GM12878 (cell line): ENCODE measurements at regions of chr1 and their contacts with region 1.

Region 1: GRCh38 chr1:117616356-117616755 is 10.5 kb downstream of the TENT5C start:
- DNase-seq: no peak
- ATAC-seq: no peak
- H3K4me3 ChIP-seq: no peak overlapping the region
- H3K27ac ChIP-seq: no peak overlapping the region
- H3K4me1 ChIP-seq: no peaks in the 10 kb centered on the region
- H3K27me3 ChIP-seq: no peaks in the 10 kb centered on the region; a peak in 3 of 4 replicates
- CTCF ChIP-seq: no peak
- EP300 ChIP-seq: no peak
- POLR2A ChIP-seq: no peak
- RAD21 ChIP-seq: no peak

Region 2: DNA sequence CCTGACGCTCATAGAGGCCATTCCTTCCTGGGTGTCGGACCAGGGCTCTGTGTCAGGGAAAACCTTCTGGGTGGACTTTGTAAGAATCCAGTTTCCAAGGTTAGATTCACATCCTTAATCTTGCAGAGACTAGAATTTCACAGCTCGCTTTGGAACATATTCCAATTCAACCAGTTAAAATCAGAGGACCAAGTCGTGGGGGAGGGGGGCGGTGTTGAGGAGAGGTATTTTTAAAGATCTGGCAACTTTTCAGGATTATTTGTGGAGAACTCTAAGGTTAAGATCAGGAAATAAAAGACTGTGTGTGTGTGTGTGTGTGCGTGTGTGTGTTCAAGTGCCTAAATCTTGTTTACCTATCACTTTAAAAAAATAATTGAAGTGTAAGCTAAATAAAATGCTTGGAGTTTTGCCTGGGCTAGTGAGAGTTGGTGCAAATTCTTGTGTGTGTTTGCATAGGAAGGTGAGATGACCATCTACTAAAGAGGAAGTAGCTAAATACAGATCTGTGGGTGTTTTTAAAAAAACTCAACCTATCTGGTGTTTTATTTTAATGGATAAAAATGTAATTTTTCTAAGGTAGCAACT is 11.3 kb after region 1 on chr1:
- CTCF ChIA-PET with region 1: interaction called, 4 read pairs
- POLR2A ChIA-PET with region 1: interaction called, 3 read pairs
- RAD21 ChIA-PET with region 1: no interaction called
- SMC1A ChIA-PET with region 1: interaction called, 10 read pairs
- in situ Hi-C with region 1: no loop called
- intact Hi-C with region 1: no loop called
- DNase-seq: no peak
- ATAC-seq: peak; percentile 51; the same call in 2 of the 3 replicates
- H3K4me3 ChIP-seq: no peak overlapping the region
- H3K27ac ChIP-seq: no peak overlapping the region
- H3K4me1 ChIP-seq: peaks cover 8% of the 10 kb centered on the region
- H3K27me3 ChIP-seq: peaks cover 2 to 3% of the 10 kb centered on the region in 2 experiments; a peak in 3 of 4 replicates
- CTCF ChIP-seq: no peak
- EP300 ChIP-seq: no peak
- POLR2A ChIP-seq: no peak
- RAD21 ChIP-seq: no peak

Region 3: DNA sequence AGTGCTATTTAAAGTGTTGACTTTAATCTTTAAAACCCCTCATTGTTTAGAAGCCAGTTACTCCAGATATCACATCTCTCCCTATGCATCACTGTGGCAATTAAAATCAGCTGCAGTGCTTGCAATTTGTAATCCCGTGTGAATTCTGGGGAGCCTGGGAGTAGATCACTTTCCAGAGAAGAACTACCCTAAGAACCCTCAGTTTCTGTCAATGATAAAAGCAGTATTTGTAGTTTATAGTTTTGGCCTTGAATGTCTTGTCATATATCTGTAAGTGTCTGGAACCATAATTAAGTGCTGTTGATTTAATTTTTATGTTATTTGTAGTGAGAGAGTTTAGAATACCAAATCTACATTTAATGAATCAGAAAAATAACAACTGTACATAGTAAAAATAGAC is 574.2 kb after region 1 on chr1:
- CTCF ChIA-PET with region 1: no interaction called
- POLR2A ChIA-PET with region 1: no interaction called
- RAD21 ChIA-PET with region 1: no interaction called
- SMC1A ChIA-PET with region 1: no interaction called
- in situ Hi-C with region 1: no loop called
- intact Hi-C with region 1: no loop called
- DNase-seq: no peak
- ATAC-seq: no peak
- H3K4me3 ChIP-seq: no peak overlapping the region
- H3K27ac ChIP-seq: no peak overlapping the region
- H3K4me1 ChIP-seq: no peaks in the 10 kb centered on the region
- H3K27me3 ChIP-seq: no peaks in the 10 kb centered on the region; a peak in 1 of 4 replicates
- CTCF ChIP-seq: no peak
- EP300 ChIP-seq: no peak
- POLR2A ChIP-seq: no peak
- RAD21 ChIP-seq: no peak